Heart right ventricle (tissue), 16 donors: ENCODE measurements at regions of chr22 and their contacts with region 1.

Region 1: GRCh38 chr22:26681395-26681821 is 24.0 kb downstream of the MIAT start:
- DNase-seq: no peak
- ATAC-seq: peak in 1 of 8 donors; percentile 46
- H3K4me3 ChIP-seq: no peak overlapping the region
- H3K27ac ChIP-seq: no peak overlapping the region
- H3K4me1 ChIP-seq: peaks cover 0 to 17% (median 0%) of the 10 kb centered on the region in 9 donors
- H3K27me3 ChIP-seq: no peaks in the 10 kb centered on the region
- CTCF ChIP-seq: no peak

Region 2: DNA sequence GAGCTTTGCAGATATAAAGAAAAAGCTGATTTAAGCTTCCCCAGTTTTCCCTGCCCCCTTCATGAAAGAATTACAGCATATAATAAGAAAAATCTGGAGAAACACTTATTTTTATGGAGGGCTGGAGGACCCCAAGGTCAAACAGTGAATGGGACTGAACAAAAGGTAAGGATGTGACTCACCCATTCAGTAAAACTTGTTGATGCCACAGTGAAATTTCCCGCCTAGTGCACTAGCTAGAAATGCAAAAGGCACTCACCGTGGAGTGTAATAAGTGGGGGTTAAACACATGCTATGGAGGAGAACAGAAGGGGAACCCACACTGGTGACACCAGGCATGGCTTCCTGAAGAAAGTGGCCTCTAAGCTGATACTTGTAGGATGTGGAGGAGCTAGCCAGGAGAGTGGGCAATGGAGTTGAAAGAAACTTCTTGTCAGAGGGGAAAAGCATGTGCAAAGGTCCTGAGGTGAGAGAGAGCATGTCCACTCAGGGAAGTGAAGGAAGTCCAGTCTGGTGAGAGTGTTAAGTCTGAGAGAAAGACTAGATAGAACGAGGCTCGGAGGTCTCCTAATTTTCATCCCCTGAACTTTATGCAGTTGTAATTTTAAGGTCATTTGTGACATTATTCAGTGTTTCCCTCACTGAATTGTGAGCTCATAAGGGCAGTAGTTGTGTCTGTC is 53.1 kb after region 1 on chr22:
- intact Hi-C with region 1: loop called in 1 of 10 experiments (anchors 5 kb)
- DNase-seq: no peak
- ATAC-seq: peak in 2 of 8 donors; percentile 14 to 24
- H3K4me3 ChIP-seq: no peak overlapping the region
- H3K27ac ChIP-seq: peak overlapping the region in 5 of 10 donors; percentile 30 to 79 (median 55)
- H3K4me1 ChIP-seq: peaks cover 0 to 16% (median 6%) of the 10 kb centered on the region in 9 donors
- H3K27me3 ChIP-seq: no peaks in the 10 kb centered on the region
- CTCF ChIP-seq: no peak

Region 3: DNA sequence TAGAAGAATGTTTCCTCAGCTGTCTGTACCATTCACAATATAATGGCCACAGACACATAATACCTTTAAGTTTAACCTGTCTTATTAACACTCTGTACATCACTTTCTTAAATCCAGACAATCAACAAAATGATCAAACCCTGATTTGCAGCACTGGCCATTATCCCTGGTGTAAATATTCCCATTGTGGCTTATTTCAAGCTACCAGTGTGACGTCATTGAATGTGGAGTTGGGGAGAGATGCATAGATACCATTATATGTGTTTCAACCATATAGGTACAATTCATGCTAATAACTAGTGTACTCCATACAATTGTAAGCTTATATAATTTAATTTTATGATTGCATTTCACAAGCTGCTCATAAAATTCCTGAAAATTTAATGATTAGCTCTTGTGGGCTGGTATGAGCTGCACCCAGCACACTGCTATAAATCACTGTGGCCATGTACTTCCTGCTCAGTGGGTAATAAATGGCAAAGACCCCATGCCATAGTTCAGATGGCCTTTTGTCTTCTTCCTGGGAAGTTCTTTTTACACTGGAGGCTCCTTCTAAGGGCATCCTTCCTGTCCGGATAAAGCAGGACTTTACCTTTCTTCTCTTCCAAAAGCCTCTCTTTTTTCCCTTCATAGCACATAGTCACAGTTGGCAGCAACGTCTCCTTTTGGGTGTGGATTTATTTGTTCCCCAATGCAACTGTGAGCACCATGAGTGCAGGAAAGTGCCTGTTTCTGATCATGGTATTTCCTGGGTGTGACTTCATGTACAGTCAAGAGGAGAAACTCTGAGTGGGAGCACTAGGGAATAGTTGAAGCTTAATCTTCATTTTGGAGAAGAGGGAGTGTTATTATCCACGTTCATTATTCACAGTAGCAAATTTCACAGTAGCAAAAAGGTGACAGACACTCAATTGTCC is 63.7 kb after region 1 on chr22:
- intact Hi-C with region 1: loop called in 2 of 10 experiments (anchors 5 to 10 kb)
- DNase-seq: no peak
- ATAC-seq: no peak
- H3K4me3 ChIP-seq: no peak overlapping the region
- H3K27ac ChIP-seq: no peak overlapping the region
- H3K4me1 ChIP-seq: peaks cover 0 to 9% (median 0%) of the 10 kb centered on the region in 9 donors
- H3K27me3 ChIP-seq: no peaks in the 10 kb centered on the region
- CTCF ChIP-seq: no peak